AG04449 (cell line): ENCODE measurements at regions of chr15 and their contacts with region 1.

Region 1: DNA sequence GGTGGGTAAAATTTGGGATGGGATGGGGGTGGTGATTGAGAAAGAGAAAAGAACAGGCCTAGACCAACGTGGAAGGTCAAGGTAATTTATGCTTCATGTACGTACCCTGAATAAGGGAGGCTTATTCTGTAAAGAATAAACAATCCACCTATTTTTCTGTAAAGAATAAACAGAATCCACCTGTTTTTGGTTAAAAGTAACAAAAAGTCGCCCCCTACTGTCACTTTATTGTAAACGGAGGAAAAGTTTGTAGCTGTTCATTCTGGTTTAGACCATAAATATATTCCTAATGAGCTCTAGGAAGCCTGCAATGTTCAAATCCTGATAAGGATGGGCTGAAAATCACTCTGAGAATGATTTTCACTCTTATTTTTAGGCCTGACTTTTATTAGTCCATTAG is 23.5 kb upstream of the SQOR start:
- DNase-seq: no peak
- H3K4me3 ChIP-seq: no peak overlapping the region
- CTCF ChIP-seq: peak; percentile 18

Region 2: GRCh38 chr15:45468294-45468693 is 143.0 kb before region 1 on chr15:
- CTCF ChIA-PET with region 1: interaction called, 11 read pairs
- POLR2A ChIA-PET with region 1: no interaction called
- DNase-seq: no peak
- H3K4me3 ChIP-seq: no peak overlapping the region
- CTCF ChIP-seq: no peak

Region 3: GRCh38 chr15:45587095-45587860 is 24.0 kb before region 1 on chr15 and contains the start of gene BLOC1S6:
- CTCF ChIA-PET with region 1: interaction called, 13 read pairs
- POLR2A ChIA-PET with region 1: interaction called, 4 read pairs
- DNase-seq: peak; percentile 52
- H3K4me3 ChIP-seq: peak within 1 kb of the TSS; percentile 91
- CTCF ChIP-seq: no peak

Region 4: DNA sequence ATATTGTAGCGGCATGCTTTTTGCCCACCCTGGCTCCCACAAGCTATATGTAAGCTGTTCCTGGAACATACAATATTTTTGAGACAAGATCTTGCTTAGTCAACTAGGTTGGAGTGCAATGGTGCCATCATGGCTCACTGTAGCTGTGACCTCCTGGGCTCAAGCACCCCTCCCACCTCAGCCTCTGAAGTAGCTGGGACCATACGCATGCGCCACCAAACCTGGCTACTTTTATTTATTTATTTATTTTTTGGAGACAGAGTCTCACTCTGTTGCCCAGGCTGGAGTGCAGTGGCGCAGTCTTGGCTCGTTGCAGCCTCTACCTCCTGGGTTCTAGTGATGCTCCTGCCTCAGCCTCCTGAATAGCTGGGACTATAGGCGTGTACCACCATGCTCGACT is 16.8 kb after region 1 on chr15:
- CTCF ChIA-PET with region 1: interaction called, 24 read pairs
- POLR2A ChIA-PET with region 1: no interaction called
- DNase-seq: no peak
- H3K4me3 ChIP-seq: no peak overlapping the region
- CTCF ChIP-seq: no peak

Region 5: GRCh38 chr15:45641374-45641781 is 30.1 kb after region 1 on chr15:
- CTCF ChIA-PET with region 1: interaction called, 12 read pairs
- POLR2A ChIA-PET with region 1: no interaction called
- DNase-seq: peak; percentile 89
- H3K4me3 ChIP-seq: no peak overlapping the region
- CTCF ChIP-seq: no peak

Region 6: DNA sequence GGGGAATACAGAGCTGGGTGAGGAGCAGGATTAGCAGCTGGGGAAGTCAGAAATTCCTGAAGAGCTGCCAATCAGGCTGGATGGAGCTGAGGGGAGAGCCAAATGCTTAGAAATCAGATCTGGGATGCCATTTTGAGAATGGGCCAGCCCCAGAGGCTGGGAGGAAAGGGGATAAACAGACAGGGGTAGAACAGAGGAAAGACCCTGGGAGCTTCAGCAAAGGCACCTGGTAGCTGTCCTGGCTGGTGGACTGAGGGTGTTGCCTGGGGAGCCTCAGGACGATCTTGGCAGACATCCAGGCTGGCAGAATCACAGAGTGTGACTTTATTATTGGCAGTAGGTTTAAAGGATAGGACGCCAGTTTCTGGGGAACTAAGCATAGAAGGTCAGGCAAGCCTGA is 121.4 kb after region 1 on chr15:
- CTCF ChIA-PET with region 1: no interaction called
- POLR2A ChIA-PET with region 1: no interaction called
- DNase-seq: no peak
- H3K4me3 ChIP-seq: no peak overlapping the region
- CTCF ChIP-seq: no peak

Region 7: DNA sequence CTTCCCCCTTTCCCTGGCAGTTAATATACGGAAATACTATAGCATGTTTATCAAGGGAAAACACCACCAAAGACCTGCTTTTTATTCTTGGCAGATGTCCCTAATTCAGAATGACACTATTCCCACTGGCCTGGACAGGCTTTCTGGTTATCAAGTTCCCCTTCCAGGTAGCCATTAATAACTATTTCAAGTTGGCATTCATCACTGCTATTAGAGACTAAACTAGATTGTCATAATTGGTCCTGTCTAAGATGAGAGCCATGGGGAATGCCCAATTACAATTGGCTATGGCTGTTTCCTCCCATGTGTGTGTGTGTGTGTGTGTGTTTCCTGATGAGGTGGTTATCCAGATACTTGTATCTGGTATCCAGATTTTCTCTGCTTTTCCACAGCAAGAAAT is 631.6 kb after region 1 on chr15:
- CTCF ChIA-PET with region 1: no interaction called
- POLR2A ChIA-PET with region 1: no interaction called
- DNase-seq: no peak
- H3K4me3 ChIP-seq: no peak overlapping the region
- CTCF ChIP-seq: no peak